Activated CD4-positive, alpha-beta memory T cell treated with anti-CD3 and anti-CD28 coated beads, Interleukin-2, amount 10 ng/mL, durations not matched to agents 7 days and 5 days (primary cell): ENCODE measurements at regions of chr17 and their contacts with region 1.

Region 1: DNA sequence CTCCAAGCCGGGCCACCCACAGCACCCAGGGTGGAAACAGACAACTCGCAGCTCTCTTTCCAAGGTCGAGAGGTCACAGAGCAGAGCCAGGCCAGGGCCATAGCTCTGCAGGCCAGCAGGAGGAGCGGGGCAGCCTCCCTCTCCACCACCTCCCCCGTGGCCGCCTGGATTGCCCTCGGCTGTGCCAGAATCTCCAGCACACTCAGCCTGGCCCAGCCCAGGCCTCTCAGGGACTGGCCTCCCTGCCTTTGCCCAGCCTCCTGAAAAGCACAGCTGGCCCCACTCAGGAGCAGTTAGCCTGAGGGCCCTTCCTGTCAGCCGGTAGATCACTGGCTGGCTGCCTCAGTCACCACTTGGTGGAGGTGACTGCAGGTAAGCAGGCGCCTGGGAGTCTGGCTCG is 85.8 kb upstream of the SEC14L1 start:
- DNase-seq: no peak
- H3K4me3 Mint-ChIP-seq: no peak overlapping the region
- H3K27ac Mint-ChIP-seq: no peak overlapping the region
- H3K4me1 Mint-ChIP-seq: no peaks in the 10 kb centered on the region
- H3K27me3 Mint-ChIP-seq: no peaks in the 10 kb centered on the region

Region 2: GRCh38 chr17:76868176-76868668 is 186.7 kb before region 1 on chr17 and contains the start of gene MGAT5B:
- CTCF ChIA-PET with region 1: interaction called, 47 read pairs
- POLR2A ChIA-PET with region 1: interaction called, 7 read pairs
- DNase-seq: peak; percentile 76
- H3K4me3 Mint-ChIP-seq: peak within 1 kb of the TSS; percentile 57
- H3K27ac Mint-ChIP-seq: peak within 1 kb of the TSS; percentile 54
- H3K4me1 Mint-ChIP-seq: peaks cover 13% of the 10 kb centered on the region
- H3K27me3 Mint-ChIP-seq: peaks cover 33% of the 10 kb centered on the region
- total RNA-seq, gene MGAT5B: 0.08 to 0.13 TPM

Region 3: GRCh38 chr17:77011173-77012011 is 43.5 kb before region 1 on chr17:
- CTCF ChIA-PET with region 1: interaction called, 17 read pairs
- POLR2A ChIA-PET with region 1: no interaction called
- DNase-seq: peak; percentile 62
- H3K4me3 Mint-ChIP-seq: no peak overlapping the region
- H3K27ac Mint-ChIP-seq: no peak overlapping the region
- H3K4me1 Mint-ChIP-seq: no peaks in the 10 kb centered on the region
- H3K27me3 Mint-ChIP-seq: peaks cover 13% of the 10 kb centered on the region